ENCODE measurements at regions of chr9 and their contacts with region 1.

Region 1: DNA sequence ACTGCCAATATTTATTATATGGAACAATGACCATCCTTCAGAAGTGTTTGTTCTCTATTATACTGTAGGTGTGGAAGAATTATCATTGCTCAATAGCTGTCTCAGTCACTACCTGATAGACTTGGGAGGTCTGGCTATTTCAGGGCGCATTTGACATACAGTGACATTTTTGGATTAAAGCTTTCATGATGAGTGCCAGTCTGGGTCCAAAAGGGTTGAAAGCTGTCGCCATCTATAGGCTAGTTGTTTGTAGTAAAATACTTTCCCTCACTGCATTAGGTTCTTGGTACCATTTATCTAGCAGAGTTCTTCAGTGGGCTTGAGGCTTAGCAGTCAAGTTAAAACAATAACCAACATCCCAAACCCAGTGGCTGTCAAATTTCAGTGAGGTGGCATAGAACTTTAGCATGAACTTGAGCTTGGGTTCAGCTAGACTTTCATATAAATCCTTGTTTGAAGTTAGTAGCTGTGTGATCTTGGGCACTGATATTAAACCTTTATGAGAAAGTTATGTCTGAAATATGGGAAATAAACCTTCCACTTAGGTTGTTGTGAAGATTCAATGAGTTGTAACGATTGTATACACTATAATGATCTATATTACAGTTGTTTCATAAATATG is 110.5 kb upstream of the CDKN2B start:
- DNase-seq: no peak
- H3K4me3 ChIP-seq: no peak overlapping the region
- H3K27ac ChIP-seq: no peak overlapping the region
- H3K27me3 ChIP-seq: no peaks in the 10 kb centered on the region
- CTCF ChIP-seq: peak; percentile 59

Region 2: DNA sequence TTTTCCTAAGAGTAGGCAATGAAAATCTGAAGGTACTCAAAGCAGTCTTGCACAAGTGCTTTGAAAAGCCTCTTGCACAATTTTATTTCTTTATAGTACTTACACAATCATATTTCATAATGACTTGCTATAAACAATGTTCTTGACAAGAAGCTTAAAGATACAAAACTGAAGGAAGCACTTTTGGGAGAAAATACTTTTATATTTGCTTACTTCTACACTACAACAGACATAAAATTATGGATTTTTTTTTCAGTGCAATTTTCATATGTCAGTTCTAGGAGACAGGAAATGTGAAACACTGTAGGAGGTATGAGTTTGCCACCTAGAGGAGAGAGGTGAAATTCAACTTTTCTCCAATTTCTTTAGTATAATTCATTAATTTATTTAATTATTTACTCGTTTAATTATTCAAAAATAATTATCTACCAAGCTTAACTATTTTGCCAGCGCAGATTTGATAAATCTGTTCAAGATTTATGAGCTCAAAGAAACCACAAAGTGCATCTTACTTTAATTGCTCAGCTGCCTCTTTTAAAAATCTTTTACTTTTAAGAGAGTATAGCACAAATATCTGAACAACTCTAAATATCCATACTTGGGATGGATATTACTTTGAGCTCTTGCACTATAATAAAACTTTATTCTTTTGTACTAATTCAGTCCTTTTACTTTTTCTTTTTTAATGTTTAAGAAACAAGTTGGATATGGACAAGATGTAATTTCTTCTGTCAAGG is 81.5 kb before region 1 on chr9:
- CTCF ChIA-PET with region 1: interaction called, 10 read pairs
- POLR2A ChIA-PET with region 1: no interaction called
- DNase-seq: no peak
- H3K4me3 ChIP-seq: no peak overlapping the region
- H3K27ac ChIP-seq: no peak overlapping the region
- H3K27me3 ChIP-seq: no peaks in the 10 kb centered on the region
- CTCF ChIP-seq: peak; percentile 61

Region 3: GRCh38 chr9:22105005-22105722 is 14.5 kb before region 1 on chr9:
- CTCF ChIA-PET with region 1: interaction called, 24 read pairs
- POLR2A ChIA-PET with region 1: no interaction called
- DNase-seq: no peak
- H3K4me3 ChIP-seq: no peak overlapping the region
- H3K27ac ChIP-seq: no peak overlapping the region
- H3K27me3 ChIP-seq: no peaks in the 10 kb centered on the region
- CTCF ChIP-seq: no peak

Region 4: GRCh38 chr9:22158927-22159346 is 39.3 kb after region 1 on chr9:
- CTCF ChIA-PET with region 1: no interaction called
- POLR2A ChIA-PET with region 1: no interaction called
- DNase-seq: no peak
- H3K4me3 ChIP-seq: no peak overlapping the region
- H3K27ac ChIP-seq: peak overlapping the region; percentile 52
- H3K27me3 ChIP-seq: no peaks in the 10 kb centered on the region
- CTCF ChIP-seq: no peak

Region 5: GRCh38 chr9:22911632-22912031 is 792.0 kb after region 1 on chr9:
- CTCF ChIA-PET with region 1: no interaction called
- POLR2A ChIA-PET with region 1: no interaction called
- DNase-seq: no peak
- H3K4me3 ChIP-seq: no peak overlapping the region
- H3K27ac ChIP-seq: no peak overlapping the region
- H3K27me3 ChIP-seq: no peaks in the 10 kb centered on the region
- CTCF ChIP-seq: no peak